Ascending aorta (tissue), 2 donors: ENCODE measurements at regions of chr3 and their contacts with region 1.

Region 1: GRCh38 chr3:119469381-119470189 is 822 bp downstream of the POGLUT1 start:
- DNase-seq: no peak
- H3K4me3 ChIP-seq: peak overlapping the region; percentile 77 to 97
- H3K27ac ChIP-seq: peak overlapping the region; percentile 68 to 77
- H3K4me1 ChIP-seq: peaks cover 0 to 4% of the 10 kb centered on the region in 2 donors
- H3K27me3 ChIP-seq: no peaks in the 10 kb centered on the region
- CTCF ChIP-seq: no peak

Region 2: DNA sequence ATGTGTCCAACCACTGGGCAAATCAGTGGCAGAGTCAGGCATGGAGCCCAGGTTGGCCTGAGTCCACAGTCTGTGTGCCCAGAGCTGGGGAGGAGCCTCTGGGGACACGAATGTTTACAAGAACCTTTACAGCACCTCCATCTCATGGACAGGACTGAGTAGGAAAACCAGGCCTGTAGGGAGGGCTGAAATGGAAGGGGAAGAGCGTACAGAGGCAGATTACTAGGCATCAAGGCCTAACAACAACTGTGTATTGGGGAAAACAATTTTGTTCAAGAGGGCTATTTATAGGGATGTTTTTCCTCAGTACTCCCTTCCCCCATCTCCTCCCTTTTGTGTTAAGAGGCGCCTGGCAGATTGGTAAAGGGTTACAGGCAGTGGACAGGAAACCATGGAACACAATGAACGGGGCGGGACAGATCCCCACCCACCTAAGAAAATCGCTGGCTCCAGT is 190.5 kb before region 1 on chr3:
- intact Hi-C with region 1: loop called (anchors 5 kb)
- DNase-seq: no peak
- H3K4me3 ChIP-seq: no peak overlapping the region
- H3K27ac ChIP-seq: peak overlapping the region; percentile 62 to 66
- H3K4me1 ChIP-seq: peaks cover 0 to 2% of the 10 kb centered on the region in 2 donors
- H3K27me3 ChIP-seq: no peaks in the 10 kb centered on the region
- CTCF ChIP-seq: no peak

Region 3: GRCh38 chr3:119293871-119294695 is 175.5 kb before region 1 on chr3 and contains the start of gene ARHGAP31:
- intact Hi-C with region 1: loop called (anchors 5 kb)
- DNase-seq: peak in 1 of 2 donors; percentile 83
- H3K4me3 ChIP-seq: peak within 1 kb of the TSS; percentile 78 to 80
- H3K27ac ChIP-seq: peak within 1 kb of the TSS; percentile 94 to 96
- H3K4me1 ChIP-seq: peaks cover 6 to 18% of the 10 kb centered on the region in 2 donors
- H3K27me3 ChIP-seq: no peaks in the 10 kb centered on the region
- CTCF ChIP-seq: no peak
- total RNA-seq, gene ARHGAP31: 31.4 TPM

Region 4: DNA sequence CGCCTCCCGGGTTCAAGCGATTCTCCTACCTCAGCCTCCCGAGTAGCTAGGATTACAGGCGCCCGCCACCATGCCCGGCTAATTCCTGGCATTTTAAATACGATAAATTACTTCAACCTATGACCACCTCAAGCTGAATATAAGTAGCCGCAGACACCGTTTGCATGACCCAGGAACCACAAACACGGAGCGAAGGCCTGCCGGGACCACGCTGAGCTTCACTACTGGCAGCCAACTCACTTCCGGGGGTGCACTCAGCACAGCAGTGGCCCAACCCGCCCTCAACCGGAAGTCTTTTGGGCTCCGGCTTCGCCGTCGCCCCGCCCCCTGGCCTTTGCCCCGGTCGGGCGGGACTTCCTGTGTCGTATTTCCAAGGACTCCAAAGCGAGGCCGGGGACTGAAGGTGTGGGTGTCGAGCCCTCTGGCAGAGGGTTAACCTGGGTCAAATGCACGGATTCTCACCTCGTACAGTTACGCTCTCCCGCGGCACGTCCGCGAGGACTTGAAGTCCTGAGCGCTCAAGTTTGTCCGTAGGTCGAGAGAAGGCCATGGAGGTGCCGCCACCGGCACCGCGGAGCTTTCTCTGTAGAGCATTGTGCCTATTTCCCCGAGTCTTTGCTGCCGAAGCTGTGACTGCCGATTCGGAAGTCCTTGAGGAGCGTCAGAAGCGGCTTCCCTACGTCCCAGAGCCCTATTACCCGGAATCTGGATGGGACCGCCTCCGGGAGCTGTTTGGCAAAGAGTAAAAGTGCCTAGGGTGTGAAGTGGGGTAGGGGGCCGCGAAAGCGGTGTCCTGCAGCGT is 28.8 kb after region 1 on chr3 and contains the start of gene TIMMDC1:
- intact Hi-C with region 1: loop called (anchors 1 kb)
- DNase-seq: peak; percentile 90 to 98
- H3K4me3 ChIP-seq: peak within 1 kb of the TSS; percentile 78 to 92
- H3K27ac ChIP-seq: peak within 1 kb of the TSS; percentile 93 to 94
- H3K4me1 ChIP-seq: peaks cover 5 to 24% of the 10 kb centered on the region in 2 donors
- H3K27me3 ChIP-seq: no peaks in the 10 kb centered on the region
- CTCF ChIP-seq: no peak
- total RNA-seq, gene TIMMDC1: 31.1 TPM